Cardiac septum (tissue), 1 donor: ENCODE measurements at regions of chr6 and their contacts with region 1.

Region 1: GRCh38 chr6:15621203-15622044 is 41.4 kb downstream of the DTNBP1 start:
- DNase-seq: peak; percentile 86

Region 2: GRCh38 chr6:14129575-14129974 is 1491.8 kb before region 1 on chr6:
- intact Hi-C with region 1: loop called (anchors 10 kb)
- DNase-seq: no peak

Region 3: DNA sequence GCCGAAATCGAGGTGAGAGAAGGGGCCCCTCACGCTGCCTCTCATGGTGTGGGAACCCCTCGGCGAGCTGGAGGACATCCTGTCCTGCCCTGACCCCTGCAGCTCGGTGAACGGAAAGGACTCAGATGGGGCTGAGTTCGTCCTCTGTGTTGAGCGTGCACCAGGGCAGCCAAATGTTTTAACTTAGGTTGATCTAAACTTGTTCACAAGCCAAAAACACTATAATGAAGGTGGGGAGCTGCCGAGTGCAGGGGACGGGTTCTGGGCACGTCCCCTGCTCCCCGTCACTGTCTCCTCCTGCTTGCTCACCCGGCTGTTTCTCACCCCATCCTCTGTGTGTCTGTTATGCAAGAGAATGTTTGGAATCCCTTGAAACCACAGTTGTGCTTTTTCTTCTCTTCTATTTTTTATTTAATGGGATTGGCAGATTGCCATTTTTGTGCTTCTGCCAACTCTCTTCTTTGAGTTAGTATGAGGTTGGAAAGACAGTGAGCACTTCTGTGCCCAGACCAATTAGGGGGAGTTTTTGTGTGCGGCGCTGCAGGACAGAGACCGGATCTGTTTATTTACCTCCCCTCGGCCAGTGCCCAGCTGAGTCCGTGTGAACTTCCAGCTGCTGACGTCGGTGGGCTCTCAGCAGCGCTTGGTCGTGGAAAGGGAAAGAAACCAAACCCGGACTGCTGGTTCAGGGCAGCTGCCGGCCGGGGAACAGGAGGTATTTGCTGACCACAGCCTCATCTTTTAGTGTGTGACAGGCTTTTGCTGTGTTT is 116.7 kb before region 1 on chr6:
- intact Hi-C with region 1: loop called (anchors 5 kb)
- DNase-seq: peak; percentile 76

Region 4: DNA sequence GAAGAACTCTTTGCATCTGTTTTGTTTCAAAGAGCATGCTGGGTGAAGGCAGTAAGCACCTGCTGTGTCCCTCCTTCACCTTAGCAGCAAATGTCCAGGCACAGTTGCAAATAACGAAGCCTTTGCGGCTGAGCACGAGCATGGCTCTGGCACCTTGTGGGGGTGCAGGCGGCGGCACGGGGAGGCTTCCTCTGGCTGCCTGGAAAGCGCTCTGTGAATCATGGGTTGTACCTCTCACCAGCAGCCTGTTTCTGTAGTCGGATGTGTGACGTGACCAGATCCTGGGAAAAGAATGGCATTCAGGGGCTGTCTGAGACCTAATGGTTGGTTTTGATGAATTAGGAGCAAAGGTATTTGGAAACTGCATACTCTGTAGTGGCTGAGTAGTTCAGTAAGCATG is 103.4 kb before region 1 on chr6:
- intact Hi-C with region 1: loop called (anchors 5 kb)
- DNase-seq: no peak

Region 5: GRCh38 chr6:15551798-15552197 is 69.6 kb before region 1 on chr6:
- intact Hi-C with region 1: no loop called
- DNase-seq: no peak

Region 6: DNA sequence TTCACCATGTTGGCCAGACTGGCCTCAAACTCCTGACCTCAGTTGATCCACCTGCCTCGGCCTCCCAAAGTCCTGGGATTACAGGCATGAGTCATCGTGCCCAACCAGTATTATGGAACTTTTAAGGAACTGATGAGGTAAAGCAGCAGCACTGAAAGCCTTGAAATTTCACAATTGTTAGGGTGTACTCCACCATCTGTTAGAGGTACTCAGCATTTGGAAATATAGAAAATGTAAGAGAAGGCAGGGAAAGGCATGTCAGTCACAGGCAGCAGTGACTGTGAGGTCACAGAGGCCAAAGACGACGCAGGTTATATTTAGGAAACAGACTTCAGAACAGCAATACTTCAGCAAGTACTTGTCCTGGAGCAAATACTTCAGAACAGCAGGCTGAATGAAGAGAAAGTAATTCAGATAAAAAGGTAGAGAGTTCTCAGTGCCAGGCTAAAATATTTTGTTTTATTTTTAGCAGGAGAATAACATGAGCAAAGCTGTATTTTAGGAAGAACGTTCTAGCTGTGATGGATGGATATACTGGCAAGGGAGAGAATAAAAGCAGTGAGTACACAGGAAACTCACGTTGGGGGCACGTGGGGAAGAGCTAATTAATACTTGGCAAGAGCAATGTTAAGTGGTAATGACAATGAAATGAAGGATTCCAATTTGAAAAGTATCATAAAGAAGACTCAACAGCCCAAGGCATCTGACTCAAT is 25.8 kb before region 1 on chr6:
- intact Hi-C with region 1: loop called (anchors 1 kb)
- DNase-seq: no peak